Activated T-helper 1 cell treated with anti-CD3 and anti-CD28 coated beads, Interleukin-12 subunit alpha, Interleukin-12 subunit beta, Interleukin-2, Interleukin-4 antibody, amounts not matched to agents 30 ng/mL and 10 ng/mL and 1 ng/mL, durations not matched to agents 14 hours and 24 hours and 36 hours (primary cell): ENCODE measurements at regions of chr6 and their contacts with region 1.

Region 1: DNA sequence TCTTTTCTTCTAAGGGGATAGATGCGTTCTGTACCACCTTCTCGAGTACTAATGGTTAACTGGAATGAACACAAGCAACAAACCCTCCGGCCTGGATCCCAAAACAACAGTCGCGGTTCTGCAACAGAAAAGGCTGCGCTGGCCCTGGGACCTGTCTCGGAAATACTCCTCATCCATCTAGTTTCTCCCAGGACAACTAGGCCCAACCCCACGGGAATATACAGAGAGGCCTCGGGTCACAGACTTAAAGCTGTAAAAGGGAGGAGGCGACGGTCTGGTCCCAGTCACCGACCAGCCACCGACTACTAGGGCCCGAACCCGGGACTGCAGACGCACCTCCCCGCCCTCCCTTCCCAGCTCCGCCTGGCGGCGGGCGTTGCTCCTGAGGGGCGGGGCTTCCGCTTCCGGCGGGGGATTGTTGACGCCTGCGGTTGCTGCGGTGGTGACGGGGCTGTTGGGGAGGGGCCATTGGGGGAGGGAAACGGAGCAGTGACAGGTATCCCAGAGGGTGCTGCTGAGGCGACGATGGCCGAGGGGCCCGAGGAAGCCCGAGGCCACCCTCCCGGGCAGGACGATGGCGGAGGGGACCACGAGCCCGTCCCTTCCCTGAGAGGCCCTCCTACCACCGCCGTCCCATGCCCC is at the start of gene FAM8A1:
- DNase-seq: peak; percentile 92
- H3K4me3 Mint-ChIP-seq: peak within 1 kb of the TSS; percentile 85
- H3K27ac Mint-ChIP-seq: peak within 1 kb of the TSS; percentile 78
- H3K4me1 Mint-ChIP-seq: peaks cover 35% of the 10 kb centered on the region
- H3K27me3 Mint-ChIP-seq: peaks cover 2% of the 10 kb centered on the region
- total RNA-seq, gene FAM8A1: 4.5 and 4.6 TPM in 2 replicates

Region 2: DNA sequence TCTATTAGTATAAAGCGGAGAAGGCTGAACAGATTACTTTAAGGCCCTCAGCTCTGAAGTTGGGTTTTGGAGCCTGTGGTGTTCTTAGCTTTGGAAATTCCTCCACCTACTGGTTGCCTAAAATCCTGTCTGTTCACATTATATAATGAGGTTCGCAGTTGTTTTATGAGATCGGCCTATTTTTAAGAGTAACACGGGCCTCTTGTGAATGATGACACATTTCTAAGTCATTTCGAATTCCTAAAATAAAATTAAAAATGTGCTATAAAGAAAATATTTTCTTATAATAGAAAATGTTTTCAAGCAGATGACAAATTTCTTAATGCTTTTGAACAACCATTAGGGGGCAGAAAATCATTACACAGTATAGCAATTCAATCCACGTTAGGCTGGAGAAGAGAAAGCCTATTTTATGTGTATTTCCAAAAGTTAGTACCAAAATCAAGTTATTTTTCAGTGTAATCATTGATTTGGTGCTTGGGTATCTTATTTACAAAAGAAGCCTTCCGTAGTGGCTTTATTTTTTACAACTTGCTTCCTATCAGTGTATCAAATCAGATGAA is 15.7 kb before region 1 on chr6:
- intact Hi-C with region 1: loop called (anchors 1 kb)
- DNase-seq: no peak
- H3K4me3 Mint-ChIP-seq: no peak overlapping the region
- H3K27ac Mint-ChIP-seq: no peak overlapping the region
- H3K4me1 Mint-ChIP-seq: peaks cover 20% of the 10 kb centered on the region
- H3K27me3 Mint-ChIP-seq: peaks cover 9% of the 10 kb centered on the region

Region 3: GRCh38 chr6:17633465-17634188 is 33.6 kb after region 1 on chr6:
- intact Hi-C with region 1: loop called (anchors 2 kb)
- DNase-seq: peak; percentile 21
- H3K4me3 Mint-ChIP-seq: peak overlapping the region; percentile 13
- H3K27ac Mint-ChIP-seq: peak overlapping the region; percentile 80
- H3K4me1 Mint-ChIP-seq: peaks cover 55% of the 10 kb centered on the region
- H3K27me3 Mint-ChIP-seq: no peaks in the 10 kb centered on the region

Region 4: GRCh38 chr6:17673543-17674254 is 73.7 kb after region 1 on chr6:
- intact Hi-C with region 1: loop called (anchors 2 kb)
- DNase-seq: no peak
- H3K4me3 Mint-ChIP-seq: no peak overlapping the region
- H3K27ac Mint-ChIP-seq: peak overlapping the region; percentile 87
- H3K4me1 Mint-ChIP-seq: peaks cover 21% of the 10 kb centered on the region
- H3K27me3 Mint-ChIP-seq: no peaks in the 10 kb centered on the region

Region 5: DNA sequence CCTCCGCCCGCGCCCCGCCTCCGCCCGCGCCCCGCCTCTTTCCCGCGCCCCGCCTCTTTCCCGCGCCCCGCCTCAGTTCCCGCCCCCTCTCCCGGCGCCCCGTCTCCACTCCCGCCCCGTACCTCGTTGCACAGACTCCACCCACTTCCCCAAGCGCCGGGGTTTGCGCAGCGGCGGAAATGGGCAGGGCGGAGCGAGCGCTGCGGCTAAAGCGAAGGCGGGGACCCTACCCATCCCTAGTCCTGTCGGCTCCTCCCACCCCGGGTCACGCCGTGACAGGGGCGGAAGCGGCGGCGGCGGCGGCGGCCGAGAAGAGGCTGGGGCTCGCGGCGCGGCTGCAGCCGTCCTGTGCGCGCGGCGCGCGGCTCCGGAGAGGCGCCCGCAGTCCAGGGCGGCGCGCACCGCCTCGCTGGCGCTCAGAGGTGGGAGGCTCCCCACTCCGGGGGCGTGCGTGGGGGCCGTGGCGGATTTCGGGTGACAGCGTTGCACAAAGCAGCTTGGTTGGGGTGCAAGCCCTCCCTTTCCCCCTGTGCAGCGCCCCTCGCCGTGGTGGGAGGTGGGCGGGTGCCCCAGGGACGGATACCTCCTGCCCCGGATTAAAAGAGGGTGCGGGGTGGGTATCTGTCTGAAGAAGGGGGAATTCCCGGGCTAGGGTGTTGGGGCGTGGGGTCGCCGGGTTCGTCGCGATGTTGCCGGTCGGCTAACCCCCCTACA is 555.3 kb after region 1 on chr6 and contains the start of gene KDM1B:
- intact Hi-C with region 1: loop called (anchors 2 kb)
- DNase-seq: peak; percentile 99
- H3K4me3 Mint-ChIP-seq: peak within 1 kb of the TSS; percentile 92
- H3K27ac Mint-ChIP-seq: peak within 1 kb of the TSS; percentile 92
- H3K4me1 Mint-ChIP-seq: peaks cover 24% of the 10 kb centered on the region
- H3K27me3 Mint-ChIP-seq: peaks cover 9% of the 10 kb centered on the region
- total RNA-seq, gene KDM1B: 7.1 and 7.2 TPM in 2 replicates

Region 6: DNA sequence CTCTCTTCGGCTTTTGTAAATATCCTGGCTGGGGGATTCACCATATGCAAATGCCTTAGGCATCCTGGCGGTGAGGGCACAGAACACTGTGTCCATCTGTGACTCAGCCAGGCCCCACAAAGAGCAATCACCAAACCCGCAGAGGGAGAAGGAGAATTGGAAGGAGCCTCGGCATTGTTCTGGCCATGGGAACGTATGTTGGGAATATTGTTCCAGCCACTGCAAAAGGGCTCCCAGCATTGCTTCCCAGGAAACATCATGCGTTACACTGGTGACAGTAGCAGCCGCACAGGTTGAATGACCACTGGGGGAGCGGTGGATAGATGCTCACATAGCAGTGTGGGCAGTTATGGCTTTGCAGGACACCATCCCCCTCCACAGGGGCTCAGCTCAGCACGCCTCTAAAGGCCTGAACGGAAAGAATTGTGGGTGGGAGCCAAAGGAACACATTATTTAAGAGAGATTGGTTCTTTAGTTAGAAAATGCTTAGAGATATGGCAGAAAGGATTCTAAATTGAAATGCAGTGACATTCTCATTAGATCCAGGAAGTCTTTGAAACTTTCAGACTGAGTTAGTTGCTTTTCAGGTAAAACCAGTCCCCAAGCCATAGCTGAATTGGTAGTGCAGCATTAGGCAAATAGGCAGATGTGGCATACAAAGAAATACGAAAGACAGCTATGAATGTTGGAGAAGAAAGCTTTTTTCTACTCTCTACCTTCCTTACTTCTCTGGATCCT is 891.5 kb after region 1 on chr6:
- intact Hi-C with region 1: no loop called
- DNase-seq: no peak
- H3K4me3 Mint-ChIP-seq: no peak overlapping the region
- H3K27ac Mint-ChIP-seq: no peak overlapping the region
- H3K4me1 Mint-ChIP-seq: no peaks in the 10 kb centered on the region
- H3K27me3 Mint-ChIP-seq: peaks cover 7% of the 10 kb centered on the region